ENCODE measurements at regions of chr1 and their contacts with region 1.

Region 1: GRCh38 chr1:44835738-44836675 is 7.0 kb downstream of the PTCH2 start:
- DNase-seq: peak; percentile 75 to 93 (median 81)
- ATAC-seq: peak; percentile 87
- H3K4me3 ChIP-seq: no peak overlapping the region
- H3K27ac ChIP-seq: no peak overlapping the region
- H3K4me1 ChIP-seq: peaks cover 30 to 36% of the 10 kb centered on the region in 2 experiments
- H3K27me3 ChIP-seq: no peaks in the 10 kb centered on the region
- CTCF ChIP-seq: peak; percentile 87 to 98 (median 92)
- EP300 ChIP-seq: peak; percentile 56; the same call in 1 of the 2 replicates
- POLR2A ChIP-seq: no peak
- RAD21 ChIP-seq: peak; percentile 82 to 93

Region 2: DNA sequence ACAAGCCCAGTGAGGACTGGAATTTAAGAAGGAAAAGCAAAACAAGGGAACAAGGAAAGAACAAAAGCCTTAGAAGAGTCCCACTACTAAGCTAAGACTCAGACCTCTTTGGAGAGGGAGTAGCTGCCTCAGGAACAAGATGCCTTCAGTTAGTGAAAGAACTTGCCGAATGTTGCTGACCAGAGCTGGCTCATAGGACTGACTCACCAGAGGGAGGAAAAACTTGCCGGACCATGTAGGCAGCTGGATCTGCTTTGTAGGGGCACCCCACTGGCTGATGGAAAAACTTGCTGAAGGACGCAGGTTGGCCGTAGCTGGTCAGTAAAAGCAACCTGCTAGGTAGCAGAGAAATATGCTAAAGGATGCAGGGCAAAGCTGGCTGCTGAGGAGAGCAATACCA is 385.7 kb after region 1 on chr1:
- CTCF ChIA-PET with region 1: no interaction called
- POLR2A ChIA-PET with region 1: no interaction called
- in situ Hi-C with region 1: no loop called
- intact Hi-C with region 1: loop called (anchors 10 kb)
- DNase-seq: no peak
- ATAC-seq: no peak; the same call in 1 of the 3 replicates
- H3K4me3 ChIP-seq: no peak overlapping the region
- H3K27ac ChIP-seq: no peak overlapping the region
- H3K4me1 ChIP-seq: no peaks in the 10 kb centered on the region
- H3K27me3 ChIP-seq: peaks cover 27 to 31% of the 10 kb centered on the region in 2 experiments
- CTCF ChIP-seq: no peak
- EP300 ChIP-seq: no peak
- POLR2A ChIP-seq: no peak
- RAD21 ChIP-seq: no peak

Measured in K562 (cell line).